ENCODE measurements at regions of chr5 and their contacts with region 1.

Region 1: GRCh38 chr5:87780831-87781760 is 368.4 kb upstream of the CCNH start:
- DNase-seq: no peak
- H3K4me3 ChIP-seq: no peak overlapping the region
- H3K27ac ChIP-seq: no peak overlapping the region
- H3K4me1 ChIP-seq: peaks cover 0 to 6% (median 0%) of the 10 kb centered on the region in 4 donors
- H3K27me3 ChIP-seq: peaks cover 0 to 22% (median 6%) of the 10 kb centered on the region in 4 donors
- CTCF ChIP-seq: peak; percentile 79 to 88 (median 84)
- EP300 ChIP-seq: no peak
- POLR2A ChIP-seq: no peak

Region 2: DNA sequence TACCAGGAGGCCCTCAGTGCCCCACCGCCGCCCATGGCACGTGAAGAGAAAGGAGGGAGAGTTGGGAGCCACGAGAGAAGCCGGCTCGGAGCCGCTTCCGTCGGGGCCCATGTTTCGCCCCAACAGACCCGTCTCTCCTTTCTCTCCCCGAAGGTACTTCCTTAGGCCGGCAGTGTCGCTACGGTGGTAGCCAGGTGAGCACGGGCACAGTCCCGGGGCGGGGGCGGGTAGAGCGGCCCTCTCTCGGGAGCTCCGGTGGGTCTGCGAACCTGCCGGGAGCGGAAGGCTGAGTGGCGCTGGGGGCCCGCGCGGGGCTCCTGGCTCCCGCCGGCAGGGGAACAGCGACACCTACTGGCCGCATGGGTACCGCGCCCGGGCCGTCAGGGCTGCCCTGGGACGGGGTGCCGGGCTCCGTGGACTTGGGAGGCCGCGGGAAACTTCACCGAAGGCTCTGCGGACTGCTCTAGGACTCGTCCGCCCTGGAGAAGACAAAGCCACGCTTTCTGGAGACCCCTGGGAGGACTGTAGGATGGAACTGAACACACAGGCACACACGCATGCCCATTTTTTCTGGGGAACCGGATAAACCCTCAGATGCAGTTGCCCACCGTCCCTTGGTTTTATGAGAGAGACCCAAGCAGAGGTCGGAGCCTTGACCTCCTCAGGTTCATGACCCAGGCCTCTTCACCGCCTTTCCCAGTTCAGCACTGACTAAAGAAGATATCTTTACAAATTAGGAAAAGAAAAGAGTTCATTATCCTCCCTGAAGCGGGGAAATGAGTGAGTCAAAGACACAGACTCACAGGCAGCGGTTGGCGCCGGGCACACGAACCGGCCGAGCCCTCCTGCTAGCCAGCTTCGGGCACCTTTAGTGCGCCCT is 899.4 kb after region 1 on chr5:
- intact Hi-C with region 1: loop called (anchors 2 kb)
- DNase-seq: no peak
- H3K4me3 ChIP-seq: peak overlapping the region; percentile 46 to 60 (median 51)
- H3K27ac ChIP-seq: no peak overlapping the region
- H3K4me1 ChIP-seq: peaks cover 18 to 47% (median 40%) of the 10 kb centered on the region in 4 donors
- H3K27me3 ChIP-seq: peaks cover 7 to 100% (median 88%) of the 10 kb centered on the region in 4 donors
- CTCF ChIP-seq: peak; percentile 70 to 98 (median 86)
- EP300 ChIP-seq: no peak
- POLR2A ChIP-seq: no peak